Left ventricle myocardium inferior (tissue), 1 donor: ENCODE measurements at regions of chr11 and their contacts with region 1.

Region 1: GRCh38 chr11:6251120-6251733 is 8.4 kb upstream of the CCKBR start:
- DNase-seq: peak; percentile 53
- H3K4me3 ChIP-seq: no peak overlapping the region
- H3K27ac ChIP-seq: no peak overlapping the region
- H3K4me1 ChIP-seq: peaks cover 15% of the 10 kb centered on the region
- H3K27me3 ChIP-seq: peaks cover 9% of the 10 kb centered on the region
- CTCF ChIP-seq: peak; percentile 90

Region 2: GRCh38 chr11:6307876-6308275 is 56.6 kb after region 1 on chr11:
- intact Hi-C with region 1: loop called (anchors 10 kb)
- DNase-seq: no peak
- H3K4me3 ChIP-seq: no peak overlapping the region
- H3K27ac ChIP-seq: no peak overlapping the region
- H3K4me1 ChIP-seq: no peaks in the 10 kb centered on the region
- H3K27me3 ChIP-seq: peaks cover 3% of the 10 kb centered on the region
- CTCF ChIP-seq: no peak

Region 3: GRCh38 chr11:6353367-6353987 is 102.2 kb after region 1 on chr11:
- intact Hi-C with region 1: loop called (anchors 10 kb)
- DNase-seq: peak; percentile 24
- H3K4me3 ChIP-seq: no peak overlapping the region
- H3K27ac ChIP-seq: no peak overlapping the region
- H3K4me1 ChIP-seq: peaks cover 15% of the 10 kb centered on the region
- H3K27me3 ChIP-seq: no peaks in the 10 kb centered on the region
- CTCF ChIP-seq: peak; percentile 96